Activated T-helper 1 cell treated with anti-CD3 and anti-CD28 coated beads, Interleukin-12 subunit alpha, Interleukin-12 subunit beta, Interleukin-2, Interleukin-4 antibody, amounts not matched to agents 30 ng/mL and 10 ng/mL and 1 ng/mL, durations not matched to agents 14 hours and 24 hours and 36 hours (primary cell): ENCODE measurements at regions of chr1 and their contacts with region 1.

Region 1: DNA sequence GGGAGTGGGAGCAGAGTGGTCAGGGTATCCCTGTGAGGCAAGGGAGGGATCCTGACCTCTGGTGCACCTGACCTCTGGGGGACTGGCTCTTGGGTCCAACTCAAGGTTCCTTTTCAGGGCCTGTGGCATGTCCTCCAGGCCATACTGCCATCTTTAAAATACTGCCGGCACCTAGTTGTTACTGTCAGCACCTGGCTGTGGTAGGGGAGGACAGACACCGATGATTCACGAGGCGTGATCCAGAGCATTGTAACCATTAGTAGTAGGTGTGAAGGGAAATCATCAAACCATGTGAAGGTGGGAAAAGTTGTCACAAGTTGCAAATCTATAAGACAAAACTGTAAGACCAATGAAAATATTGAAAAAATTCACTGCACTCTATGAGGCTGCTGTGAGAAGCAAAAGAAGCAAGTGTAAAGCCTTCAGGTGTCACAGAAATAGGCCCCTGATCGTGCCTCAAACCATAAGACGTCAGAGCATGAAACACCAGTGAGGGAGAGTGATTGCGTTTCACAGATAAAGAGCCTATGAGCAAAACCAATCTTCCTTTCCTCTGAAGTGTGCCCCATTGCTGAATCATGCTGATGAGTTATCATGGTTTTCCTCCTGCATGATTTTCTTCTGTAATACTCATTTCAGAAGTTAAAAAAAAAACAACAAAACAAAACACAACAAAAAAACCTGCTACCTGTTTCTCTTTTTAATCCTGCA is 55.3 kb downstream of the CDC7 start:
- DNase-seq: peak; percentile 79
- H3K4me3 Mint-ChIP-seq: peak overlapping the region; percentile 67
- H3K27ac Mint-ChIP-seq: peak overlapping the region; percentile 83
- H3K4me1 Mint-ChIP-seq: peaks cover 90% of the 10 kb centered on the region
- H3K27me3 Mint-ChIP-seq: no peaks in the 10 kb centered on the region

Region 2: DNA sequence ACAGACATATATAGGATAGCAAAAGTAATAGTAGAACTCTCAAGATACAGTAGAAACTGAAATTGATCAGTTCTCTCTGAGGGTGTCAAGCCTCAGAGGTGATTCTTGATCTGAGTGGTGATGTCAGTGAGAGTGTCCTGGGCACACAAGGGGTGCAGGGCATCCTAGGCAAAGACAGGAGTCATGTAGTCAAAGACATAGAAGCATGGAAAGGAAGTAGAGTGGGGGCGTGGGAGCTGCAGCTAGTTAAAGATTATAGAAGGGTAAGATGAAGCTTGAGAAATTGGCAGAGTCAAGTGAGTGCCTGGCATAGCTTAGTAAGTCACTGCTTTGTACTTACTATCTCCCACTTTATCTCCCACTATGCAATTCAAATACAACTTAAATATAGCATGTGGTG is 32.5 kb before region 1 on chr1:
- intact Hi-C with region 1: loop called (anchors 1 kb)
- DNase-seq: no peak
- H3K4me3 Mint-ChIP-seq: no peak overlapping the region
- H3K27ac Mint-ChIP-seq: peak overlapping the region; percentile 33
- H3K4me1 Mint-ChIP-seq: peaks cover 41% of the 10 kb centered on the region
- H3K27me3 Mint-ChIP-seq: no peaks in the 10 kb centered on the region

Region 3: DNA sequence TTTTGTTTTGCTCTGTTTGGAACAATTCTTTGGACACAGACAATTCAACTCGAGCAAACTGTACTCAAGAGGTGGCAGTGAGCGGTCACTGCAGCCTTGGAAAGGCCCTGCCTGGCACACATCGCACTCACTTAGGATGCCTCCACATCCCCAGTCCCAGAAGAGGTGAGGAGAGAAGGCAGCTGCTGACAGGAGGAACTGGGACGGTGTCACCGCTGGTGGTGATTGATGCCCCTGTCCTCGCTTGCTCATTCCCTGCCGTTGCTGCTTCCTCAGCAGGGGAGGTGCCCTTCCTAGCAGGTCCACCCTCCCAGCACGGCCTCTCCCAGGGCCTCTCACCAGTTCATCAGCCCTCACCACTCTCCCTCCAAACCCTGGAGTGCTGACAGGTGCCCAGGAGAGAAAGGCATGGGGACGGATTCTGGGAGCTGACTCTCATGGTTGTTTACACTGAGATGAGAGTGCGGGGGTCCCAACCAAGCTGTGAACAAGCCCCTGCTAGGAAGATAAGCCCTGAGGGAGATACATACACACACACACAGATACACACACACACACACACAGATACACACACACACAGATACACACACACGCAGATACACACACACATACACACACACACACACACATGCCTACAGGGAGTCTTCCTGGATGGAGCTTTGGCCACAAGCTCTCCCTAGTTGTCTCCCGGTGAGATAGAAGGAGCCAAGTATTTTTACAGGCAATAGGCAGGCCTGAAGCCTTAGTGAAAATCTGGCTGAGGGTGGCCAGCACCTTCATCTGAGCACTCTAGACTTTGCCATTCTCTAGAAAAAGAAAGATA is 45.8 kb after region 1 on chr1:
- intact Hi-C with region 1: loop called (anchors 2 kb)
- DNase-seq: no peak
- H3K4me3 Mint-ChIP-seq: no peak overlapping the region
- H3K27ac Mint-ChIP-seq: peak overlapping the region; percentile 27
- H3K4me1 Mint-ChIP-seq: peaks cover 24% of the 10 kb centered on the region
- H3K27me3 Mint-ChIP-seq: peaks cover 2% of the 10 kb centered on the region

Region 4: DNA sequence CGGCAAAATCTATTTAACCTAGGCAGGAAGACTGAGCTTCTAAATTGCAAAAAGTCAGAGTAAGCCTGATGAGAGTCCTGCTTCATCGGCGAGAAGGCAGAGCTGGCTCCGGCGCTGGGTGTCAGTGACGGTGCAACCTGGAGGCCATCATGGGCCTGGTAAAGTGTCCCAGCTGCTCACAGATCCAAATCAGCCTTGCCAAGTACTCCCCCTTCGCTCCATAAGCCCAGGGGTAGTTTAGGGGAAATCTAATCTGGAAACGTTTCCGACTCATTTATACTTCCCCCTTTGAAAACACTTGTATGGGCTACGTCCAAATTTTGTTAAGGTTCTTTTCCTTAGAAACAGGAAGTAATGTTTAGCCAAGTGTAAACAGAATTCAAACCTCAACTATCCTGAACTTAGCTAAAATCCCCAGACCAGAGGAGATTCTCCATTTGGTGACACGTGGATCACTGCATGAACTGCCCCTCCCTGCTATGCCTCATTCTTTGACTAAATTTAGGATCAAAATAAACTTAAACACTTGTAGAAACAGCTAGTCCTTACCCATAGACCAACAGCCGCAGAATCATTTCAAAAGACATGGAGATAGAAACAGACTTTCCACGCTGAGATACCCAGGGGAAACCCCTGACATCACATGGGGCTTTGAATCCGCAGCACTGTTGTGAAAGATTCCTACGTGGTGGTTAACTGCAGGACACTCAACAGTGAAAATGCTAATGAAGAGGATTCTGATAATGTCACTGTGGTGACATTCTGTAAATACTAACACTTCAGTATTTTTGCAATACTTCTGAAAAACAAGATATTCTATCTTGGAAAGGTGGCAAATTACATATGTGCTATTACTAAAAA is 157.2 kb after region 1 on chr1:
- intact Hi-C with region 1: loop called (anchors 1 kb)
- DNase-seq: peak; percentile 52
- H3K4me3 Mint-ChIP-seq: peak overlapping the region; percentile 61
- H3K27ac Mint-ChIP-seq: peak overlapping the region; percentile 94
- H3K4me1 Mint-ChIP-seq: peaks cover 59% of the 10 kb centered on the region
- H3K27me3 Mint-ChIP-seq: peaks cover 4% of the 10 kb centered on the region

Region 5: DNA sequence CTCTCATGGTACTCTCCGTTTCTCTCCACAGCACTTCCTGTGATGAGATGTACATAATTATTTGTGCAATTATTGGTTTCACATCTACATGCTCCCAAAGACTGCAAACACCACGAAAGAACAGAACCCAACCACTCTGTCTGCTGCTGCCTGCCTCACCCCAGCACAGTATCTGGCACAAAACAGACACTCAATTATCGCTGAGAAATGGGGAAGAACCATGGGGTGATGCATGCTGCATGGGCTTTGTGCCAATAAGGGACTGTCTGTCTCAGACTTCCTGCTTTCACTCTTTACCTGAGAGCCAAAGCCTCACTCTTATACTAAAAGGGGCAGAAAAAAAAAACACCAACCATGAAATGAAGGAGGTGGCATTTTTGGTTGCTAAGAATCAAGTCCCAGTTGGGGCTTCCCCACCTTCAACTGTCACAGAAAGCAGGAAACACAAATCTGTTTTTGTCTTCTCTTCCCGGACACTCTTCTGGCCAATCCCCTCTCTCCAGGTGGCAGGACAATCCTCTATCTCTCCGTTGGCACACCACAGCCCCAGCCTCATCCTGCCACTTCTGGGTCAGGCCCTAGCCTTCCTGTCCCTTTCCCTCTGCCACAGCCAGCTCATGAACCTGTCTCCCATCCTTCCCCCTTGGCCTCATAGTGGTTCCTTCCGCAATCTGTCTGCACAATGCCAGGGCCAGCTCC is 248.0 kb after region 1 on chr1:
- intact Hi-C with region 1: loop called (anchors 1 kb)
- DNase-seq: peak; percentile 70
- H3K4me3 Mint-ChIP-seq: peak overlapping the region; percentile 72
- H3K27ac Mint-ChIP-seq: peak overlapping the region; percentile 93
- H3K4me1 Mint-ChIP-seq: peaks cover 68% of the 10 kb centered on the region
- H3K27me3 Mint-ChIP-seq: peaks cover 6% of the 10 kb centered on the region

Region 6: DNA sequence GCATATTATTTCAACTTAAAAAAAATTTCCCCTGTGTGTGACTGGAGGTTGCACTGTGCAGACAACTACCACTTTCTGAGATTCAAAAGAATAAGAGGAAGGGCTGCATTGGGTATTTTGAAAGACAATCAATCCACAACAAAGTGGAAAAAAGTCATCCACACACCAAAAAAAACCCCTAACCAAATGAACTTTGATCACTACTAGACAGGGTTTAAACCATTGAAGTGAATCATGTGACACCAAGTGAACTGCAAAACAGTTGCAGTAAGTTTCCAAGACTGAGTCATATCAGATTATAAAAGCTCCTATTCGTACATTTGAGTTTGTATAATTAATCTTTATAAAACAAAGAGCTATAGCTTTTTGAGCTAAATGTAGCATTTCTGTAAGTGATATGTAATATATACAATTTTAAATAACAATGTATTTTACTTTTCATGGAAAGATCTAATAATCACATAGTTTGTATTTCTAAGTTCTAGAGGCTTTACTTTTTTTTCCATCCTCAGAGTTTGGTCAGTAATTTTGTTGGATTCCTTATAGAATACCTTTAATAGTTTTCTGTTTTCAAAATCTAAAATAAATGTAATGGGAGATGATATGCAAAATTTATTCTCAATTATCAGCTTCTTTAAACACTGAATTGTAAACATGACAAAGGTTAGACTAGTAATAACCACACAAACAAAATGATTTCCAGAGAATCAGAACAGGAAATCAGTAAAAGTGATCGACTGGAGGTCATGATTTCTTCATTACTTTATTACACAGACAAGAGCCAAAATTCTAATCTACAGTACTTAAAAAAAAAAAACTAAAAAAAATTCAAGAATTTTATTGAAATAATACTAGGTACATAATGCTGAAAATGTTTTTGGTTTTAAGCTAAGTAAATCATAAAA is 981.3 kb after region 1 on chr1:
- intact Hi-C with region 1: loop called (anchors 2 kb)
- DNase-seq: peak; percentile 51
- H3K4me3 Mint-ChIP-seq: peak overlapping the region; percentile 60
- H3K27ac Mint-ChIP-seq: peak overlapping the region; percentile 92
- H3K4me1 Mint-ChIP-seq: peaks cover 86% of the 10 kb centered on the region
- H3K27me3 Mint-ChIP-seq: no peaks in the 10 kb centered on the region